Upper lobe of right lung (tissue), 1 donor: ENCODE measurements at regions of chr21 and their contacts with region 1.

Region 1: DNA sequence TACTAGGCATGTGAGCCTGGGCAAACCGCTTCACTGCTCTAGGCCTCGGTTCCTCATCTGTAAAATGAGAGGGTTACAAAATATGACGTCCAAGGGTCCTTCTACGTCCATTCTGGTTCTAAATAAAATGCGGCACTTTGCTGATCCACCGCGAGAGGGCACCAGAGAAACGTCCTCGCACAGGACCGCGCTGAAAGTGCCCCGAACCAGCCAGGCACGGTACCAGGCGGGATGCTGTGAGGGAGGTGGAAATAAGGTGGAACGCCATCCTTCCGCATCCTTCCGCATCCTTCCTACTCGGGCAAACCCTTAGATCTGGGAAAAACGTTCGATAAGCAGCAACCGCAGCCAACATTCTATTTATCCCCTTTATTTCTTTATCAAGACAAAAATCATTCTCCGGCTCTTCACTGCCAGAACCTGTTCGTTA is 60.3 kb upstream of the KRTAP19-8 start:
- DNase-seq: peak; percentile 78
- ATAC-seq: peak; percentile 94
- H3K4me3 ChIP-seq: no peak overlapping the region
- H3K27ac ChIP-seq: no peak overlapping the region
- H3K4me1 ChIP-seq: no peaks in the 10 kb centered on the region
- H3K27me3 ChIP-seq: no peaks in the 10 kb centered on the region
- CTCF ChIP-seq: peak; percentile 81

Region 2: GRCh38 chr21:31180256-31181081 is 81.9 kb after region 1 on chr21:
- intact Hi-C with region 1: loop called (anchors 5 kb)
- DNase-seq: no peak
- ATAC-seq: peak; percentile 54
- H3K4me3 ChIP-seq: no peak overlapping the region
- H3K27ac ChIP-seq: no peak overlapping the region
- H3K4me1 ChIP-seq: peaks cover 10% of the 10 kb centered on the region
- H3K27me3 ChIP-seq: no peaks in the 10 kb centered on the region
- CTCF ChIP-seq: peak; percentile 64